ENCODE measurements at regions of chr7 and their contacts with region 1.

Region 1: DNA sequence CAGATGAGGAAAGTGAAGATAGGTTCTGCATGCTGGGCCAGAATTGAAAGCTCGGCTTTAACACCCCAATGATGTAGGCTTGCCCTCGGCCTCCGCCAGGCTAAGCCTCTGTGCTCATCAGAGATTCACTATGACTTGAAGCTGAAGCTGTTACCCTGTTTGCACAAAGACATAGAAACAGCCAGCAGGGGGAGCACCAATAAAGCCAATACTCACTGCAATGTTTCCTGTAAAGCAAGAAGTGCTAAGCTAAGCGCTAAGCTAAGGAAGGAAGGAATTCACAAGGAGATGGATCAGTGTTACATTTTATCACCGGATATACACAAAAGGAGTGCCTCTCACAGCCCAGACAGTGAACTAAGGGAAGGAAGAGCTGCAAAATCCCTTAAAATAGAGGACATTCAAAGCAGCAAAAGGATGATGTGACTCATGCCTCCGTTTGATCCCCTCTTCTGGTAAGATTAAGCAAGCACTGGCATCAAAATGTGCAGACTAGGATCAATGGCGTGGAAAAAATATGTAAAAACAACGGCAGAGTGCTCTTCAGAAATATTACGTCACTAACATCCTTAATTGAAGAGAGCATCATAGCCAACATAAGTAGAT is 153.8 kb downstream of the COBL start:
- DNase-seq: peak; percentile 36 to 55 (median 52)
- H3K4me3 ChIP-seq: no peak overlapping the region
- H3K4me3 Mint-ChIP-seq: peak overlapping the region in 1 of 8 donors; percentile 2
- H3K27ac ChIP-seq: no peak overlapping the region
- H3K27ac Mint-ChIP-seq: peak overlapping the region in 1 of 7 donors; percentile 11
- H3K4me1 ChIP-seq: peaks cover 6% of the 10 kb centered on the region
- H3K4me1 Mint-ChIP-seq: peaks cover 0 to 8% (median 1%) of the 10 kb centered on the region in 4 donors
- H3K27me3 ChIP-seq: no peaks in the 10 kb centered on the region
- H3K27me3 Mint-ChIP-seq: peaks cover 14 to 19% of the 10 kb centered on the region in 2 donors

Region 2: DNA sequence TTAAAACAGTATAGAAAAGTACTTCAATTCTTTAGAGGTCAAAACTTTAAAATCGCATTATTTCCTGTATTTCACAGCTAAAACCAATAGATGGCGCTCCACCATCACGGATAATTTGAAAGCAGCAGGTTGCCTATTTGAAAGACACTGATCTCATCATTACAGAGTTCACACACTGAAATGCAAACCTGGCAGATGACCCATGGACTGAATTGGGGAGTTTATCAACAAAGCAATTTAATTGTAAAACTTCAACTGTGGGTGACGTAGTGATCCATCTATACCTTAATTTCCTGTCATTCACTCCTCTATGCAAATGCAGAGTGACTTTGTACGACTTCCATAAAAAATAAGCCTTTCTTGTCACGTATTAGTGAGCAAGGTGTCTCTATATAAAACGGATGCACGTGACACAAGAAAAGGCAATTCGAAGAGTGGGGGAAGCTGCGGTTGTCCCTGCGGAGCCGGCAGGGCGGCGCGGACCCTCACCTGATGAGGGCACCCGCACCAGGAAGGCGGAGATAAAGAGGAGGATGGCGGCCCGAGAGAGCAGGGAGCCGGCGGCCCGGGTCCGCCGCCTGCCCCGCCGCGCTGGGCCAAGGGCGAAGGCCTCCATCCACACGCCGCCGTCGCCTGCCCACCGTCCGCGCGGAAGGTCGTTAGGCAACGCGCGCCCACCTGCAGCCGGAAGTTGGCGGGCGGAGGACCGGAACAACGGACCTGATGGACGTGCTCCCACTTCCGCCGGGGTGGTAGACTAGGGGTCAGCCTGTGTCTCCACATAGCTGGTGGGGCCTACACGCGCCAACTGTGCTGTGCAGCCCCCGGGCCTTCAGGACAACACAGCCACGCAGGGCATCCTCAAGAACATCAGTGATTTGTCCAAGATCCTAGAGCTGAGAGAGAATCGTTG is 1070.0 kb before region 1 on chr7 and contains the start of gene ZPBP:
- CTCF ChIA-PET with region 1: interaction called, 85 read pairs
- POLR2A ChIA-PET with region 1: no interaction called
- intact Hi-C with region 1: loop called (anchors 1 kb)
- DNase-seq: peak; percentile 62 to 72 (median 69)
- H3K4me3 ChIP-seq: peak within 1 kb of the TSS; percentile 44 to 66
- H3K4me3 Mint-ChIP-seq: peak within 1 kb of the TSS; percentile 88 to 95 (median 88)
- H3K27ac ChIP-seq: peak within 1 kb of the TSS; percentile 23
- H3K27ac Mint-ChIP-seq: peak within 1 kb of the TSS; percentile 45 to 88 (median 80)
- H3K4me1 ChIP-seq: peaks cover 4% of the 10 kb centered on the region
- H3K4me1 Mint-ChIP-seq: peaks cover 4 to 7% (median 7%) of the 10 kb centered on the region in 4 donors
- H3K27me3 ChIP-seq: no peaks in the 10 kb centered on the region
- H3K27me3 Mint-ChIP-seq: no peaks in the 10 kb centered on the region
- total RNA-seq, gene ZPBP: not detected

Region 3: DNA sequence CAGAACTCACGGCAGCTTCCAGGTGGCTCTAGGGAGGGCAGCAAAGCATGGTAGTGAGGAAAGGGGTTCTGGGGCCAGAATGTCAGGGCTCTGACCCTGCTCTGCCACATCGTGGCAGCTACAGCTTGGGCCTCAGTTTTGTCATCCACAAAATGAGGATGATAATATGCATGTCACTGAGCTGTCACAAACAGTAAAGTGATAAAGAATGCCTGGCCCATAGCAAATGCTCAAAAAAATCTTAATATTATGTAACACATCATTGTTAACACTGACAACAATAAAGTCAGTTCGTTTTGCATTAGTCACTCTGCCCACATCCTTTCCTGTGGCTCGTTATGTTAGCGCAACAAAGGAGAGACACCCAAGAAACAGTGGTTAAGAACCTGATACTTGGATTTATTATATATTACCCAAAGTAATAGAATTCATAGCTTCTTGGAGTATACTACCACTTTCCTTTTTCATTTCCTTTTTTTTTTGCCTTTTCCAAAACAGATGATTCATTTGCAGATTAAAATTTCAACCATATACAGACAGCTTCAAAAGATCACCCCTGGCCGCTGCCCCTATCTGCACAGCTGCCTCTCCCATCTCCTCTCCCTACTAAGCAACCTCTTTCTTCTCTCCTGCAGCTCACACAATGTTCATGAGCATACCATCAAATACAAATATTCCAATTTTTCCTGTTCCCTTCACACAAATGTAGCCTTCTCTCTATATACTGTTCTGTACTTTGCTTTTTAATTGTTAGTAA is 552.1 kb before region 1 on chr7:
- CTCF ChIA-PET with region 1: interaction called, 10 read pairs
- POLR2A ChIA-PET with region 1: no interaction called
- intact Hi-C with region 1: no loop called
- DNase-seq: peak; percentile 61 to 79 (median 74)
- H3K4me3 ChIP-seq: peak overlapping the region in 1 of 2 donors; percentile 9
- H3K4me3 Mint-ChIP-seq: peak overlapping the region in 7 of 8 donors; percentile 17 to 76 (median 63)
- H3K27ac ChIP-seq: peak overlapping the region; percentile 31
- H3K27ac Mint-ChIP-seq: peak overlapping the region; percentile 54 to 94 (median 86)
- H3K4me1 ChIP-seq: peaks cover 48% of the 10 kb centered on the region
- H3K4me1 Mint-ChIP-seq: peaks cover 34 to 54% (median 45%) of the 10 kb centered on the region in 4 donors
- H3K27me3 ChIP-seq: no peaks in the 10 kb centered on the region
- H3K27me3 Mint-ChIP-seq: no peaks in the 10 kb centered on the region

Region 4: DNA sequence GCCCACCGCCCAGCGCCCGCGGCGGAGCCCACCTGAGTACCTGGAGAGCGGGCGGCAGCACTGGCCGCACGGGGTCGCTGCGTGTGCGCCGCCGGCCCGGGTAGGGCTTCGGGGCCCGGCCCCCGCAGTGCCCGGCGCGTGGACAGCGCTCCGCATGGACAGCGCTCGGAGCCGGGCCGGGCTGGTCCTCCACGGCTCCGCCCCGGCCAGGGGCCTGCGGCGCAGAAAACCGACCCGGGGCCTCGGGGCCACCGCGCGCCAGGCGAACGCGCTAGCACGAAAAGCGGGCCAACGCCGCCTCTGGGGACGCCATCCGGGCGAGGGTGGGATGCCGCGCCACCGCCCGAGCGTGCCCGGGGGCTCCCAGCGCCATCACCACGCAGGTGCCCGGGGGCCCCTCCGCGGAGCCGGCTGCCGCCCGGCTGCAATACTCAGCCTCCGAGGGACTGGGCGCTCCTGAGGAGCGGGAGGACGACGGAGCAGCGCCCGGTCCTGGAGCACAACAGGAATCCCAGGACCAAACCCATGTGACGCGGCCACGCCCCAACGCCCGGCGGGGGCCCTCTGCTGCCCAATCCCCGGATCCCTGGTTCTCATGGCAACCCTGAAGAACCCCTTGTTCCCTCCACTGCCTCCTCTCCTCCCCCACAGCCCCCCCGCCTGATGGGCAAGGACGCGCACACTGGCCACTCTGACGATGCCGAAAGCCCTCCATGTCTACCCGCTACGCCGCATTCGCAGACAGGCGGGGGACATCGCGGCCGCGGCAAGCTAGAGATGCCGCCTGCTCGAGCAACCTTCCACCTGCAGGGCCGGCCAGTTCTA is 380.2 kb before region 1 on chr7 and contains the start of gene GRB10:
- CTCF ChIA-PET with region 1: interaction called, 3 read pairs
- POLR2A ChIA-PET with region 1: no interaction called
- intact Hi-C with region 1: loop called (anchors 5 kb)
- DNase-seq: peak in 1 of 5 donors; percentile 23
- H3K4me3 ChIP-seq: no peak within 1 kb of the TSS
- H3K4me3 Mint-ChIP-seq: peak within 1 kb of the TSS; percentile 74 to 86 (median 80)
- H3K27ac ChIP-seq: no peak within 1 kb of the TSS
- H3K27ac Mint-ChIP-seq: peak within 1 kb of the TSS in 6 of 7 donors; percentile 5 to 88 (median 60)
- H3K4me1 ChIP-seq: peaks cover 7% of the 10 kb centered on the region
- H3K4me1 Mint-ChIP-seq: peaks cover 16 to 28% (median 24%) of the 10 kb centered on the region in 4 donors
- H3K27me3 ChIP-seq: peaks cover 3% of the 10 kb centered on the region
- H3K27me3 Mint-ChIP-seq: peaks cover 15 to 22% of the 10 kb centered on the region in 2 donors
- total RNA-seq, gene GRB10: 7.4 to 7.7 TPM

Region 5: DNA sequence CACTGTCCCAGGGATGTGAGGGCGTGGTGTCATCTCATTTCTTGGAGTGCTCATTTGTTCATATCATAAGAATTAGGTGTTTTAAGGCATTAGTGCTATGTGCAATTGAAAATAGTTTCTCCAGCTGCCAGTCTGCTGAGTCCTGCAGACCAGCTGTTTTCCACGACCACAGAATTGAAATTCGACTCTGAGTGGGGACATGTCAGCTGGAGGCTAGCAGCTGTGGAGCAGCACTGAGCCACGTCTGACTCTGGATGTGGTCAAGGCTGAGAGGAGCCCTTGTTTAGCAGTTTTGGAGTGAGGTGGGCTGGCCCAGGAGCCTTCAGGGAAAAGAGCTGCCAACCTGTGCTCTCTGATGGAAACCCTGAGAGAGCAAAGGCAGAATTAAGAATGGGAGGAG is 223.8 kb before region 1 on chr7:
- CTCF ChIA-PET with region 1: no interaction called
- POLR2A ChIA-PET with region 1: no interaction called
- intact Hi-C with region 1: no loop called
- DNase-seq: no peak
- H3K4me3 ChIP-seq: no peak overlapping the region
- H3K4me3 Mint-ChIP-seq: no peak overlapping the region
- H3K27ac ChIP-seq: no peak overlapping the region
- H3K27ac Mint-ChIP-seq: no peak overlapping the region
- H3K4me1 ChIP-seq: no peaks in the 10 kb centered on the region
- H3K4me1 Mint-ChIP-seq: no peaks in the 10 kb centered on the region
- H3K27me3 ChIP-seq: no peaks in the 10 kb centered on the region
- H3K27me3 Mint-ChIP-seq: peaks cover 5 to 17% of the 10 kb centered on the region in 2 donors

Region 6: DNA sequence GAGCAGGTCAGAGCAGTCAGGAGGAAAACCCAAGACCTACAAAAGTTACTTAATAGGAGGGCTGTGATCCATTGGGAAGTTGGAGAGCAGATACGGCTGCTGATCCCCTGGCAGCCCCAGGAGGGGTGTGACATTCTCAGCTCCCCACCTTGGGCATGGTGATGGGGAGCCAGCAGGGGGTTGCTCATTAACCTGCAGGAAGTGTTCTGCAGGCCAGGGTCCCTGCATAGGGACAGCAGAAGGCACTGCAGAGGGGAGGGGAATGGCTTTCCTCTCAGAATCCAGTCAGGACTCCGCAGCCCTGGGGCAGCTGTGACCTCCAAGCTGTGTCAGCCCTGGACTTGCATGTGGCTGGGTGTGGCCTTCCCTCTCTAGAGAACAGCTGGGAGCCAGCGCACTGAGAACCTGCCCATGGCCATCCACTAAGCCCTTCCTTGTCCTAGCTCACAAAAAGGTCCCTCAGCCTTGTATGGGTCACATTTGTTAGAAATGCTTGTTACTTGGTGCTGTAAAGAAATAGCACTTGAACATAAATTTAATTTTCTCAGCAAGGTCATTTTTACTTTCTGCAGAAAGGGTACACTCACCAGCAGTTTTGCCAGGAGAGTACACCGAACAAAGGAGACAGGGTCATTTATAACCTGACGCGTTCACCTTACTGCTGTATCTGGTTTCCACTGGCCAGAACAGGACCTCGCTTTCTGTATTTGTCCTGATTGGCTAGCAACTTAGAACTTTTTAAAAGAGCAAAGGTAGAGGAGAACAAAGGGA is 15.8 kb before region 1 on chr7:
- CTCF ChIA-PET with region 1: interaction called, 89 read pairs
- POLR2A ChIA-PET with region 1: no interaction called
- intact Hi-C with region 1: no loop called
- DNase-seq: no peak
- H3K4me3 ChIP-seq: no peak overlapping the region
- H3K4me3 Mint-ChIP-seq: no peak overlapping the region
- H3K27ac ChIP-seq: no peak overlapping the region
- H3K27ac Mint-ChIP-seq: no peak overlapping the region
- H3K4me1 ChIP-seq: no peaks in the 10 kb centered on the region
- H3K4me1 Mint-ChIP-seq: no peaks in the 10 kb centered on the region
- H3K27me3 ChIP-seq: no peaks in the 10 kb centered on the region
- H3K27me3 Mint-ChIP-seq: peaks cover 8 to 13% of the 10 kb centered on the region in 2 donors

Region 7: GRCh38 chr7:51366930-51367613 is 204.2 kb after region 1 on chr7:
- CTCF ChIA-PET with region 1: no interaction called
- POLR2A ChIA-PET with region 1: no interaction called
- intact Hi-C with region 1: loop called (anchors 2 kb)
- DNase-seq: no peak
- H3K4me3 ChIP-seq: no peak overlapping the region
- H3K4me3 Mint-ChIP-seq: no peak overlapping the region
- H3K27ac ChIP-seq: no peak overlapping the region
- H3K27ac Mint-ChIP-seq: no peak overlapping the region
- H3K4me1 ChIP-seq: no peaks in the 10 kb centered on the region
- H3K4me1 Mint-ChIP-seq: no peaks in the 10 kb centered on the region
- H3K27me3 ChIP-seq: no peaks in the 10 kb centered on the region
- H3K27me3 Mint-ChIP-seq: peaks cover under 1 to 6% of the 10 kb centered on the region in 2 donors

Region 8: GRCh38 chr7:51501620-51502019 is 338.8 kb after region 1 on chr7:
- CTCF ChIA-PET with region 1: no interaction called
- POLR2A ChIA-PET with region 1: no interaction called
- intact Hi-C with region 1: no loop called
- DNase-seq: no peak
- H3K4me3 ChIP-seq: no peak overlapping the region
- H3K4me3 Mint-ChIP-seq: no peak overlapping the region
- H3K27ac ChIP-seq: no peak overlapping the region
- H3K27ac Mint-ChIP-seq: no peak overlapping the region
- H3K4me1 ChIP-seq: no peaks in the 10 kb centered on the region
- H3K4me1 Mint-ChIP-seq: no peaks in the 10 kb centered on the region
- H3K27me3 ChIP-seq: no peaks in the 10 kb centered on the region
- H3K27me3 Mint-ChIP-seq: no peaks in the 10 kb centered on the region